ENCODE measurements at regions of chr7 and their contacts with region 1.

Region 1: DNA sequence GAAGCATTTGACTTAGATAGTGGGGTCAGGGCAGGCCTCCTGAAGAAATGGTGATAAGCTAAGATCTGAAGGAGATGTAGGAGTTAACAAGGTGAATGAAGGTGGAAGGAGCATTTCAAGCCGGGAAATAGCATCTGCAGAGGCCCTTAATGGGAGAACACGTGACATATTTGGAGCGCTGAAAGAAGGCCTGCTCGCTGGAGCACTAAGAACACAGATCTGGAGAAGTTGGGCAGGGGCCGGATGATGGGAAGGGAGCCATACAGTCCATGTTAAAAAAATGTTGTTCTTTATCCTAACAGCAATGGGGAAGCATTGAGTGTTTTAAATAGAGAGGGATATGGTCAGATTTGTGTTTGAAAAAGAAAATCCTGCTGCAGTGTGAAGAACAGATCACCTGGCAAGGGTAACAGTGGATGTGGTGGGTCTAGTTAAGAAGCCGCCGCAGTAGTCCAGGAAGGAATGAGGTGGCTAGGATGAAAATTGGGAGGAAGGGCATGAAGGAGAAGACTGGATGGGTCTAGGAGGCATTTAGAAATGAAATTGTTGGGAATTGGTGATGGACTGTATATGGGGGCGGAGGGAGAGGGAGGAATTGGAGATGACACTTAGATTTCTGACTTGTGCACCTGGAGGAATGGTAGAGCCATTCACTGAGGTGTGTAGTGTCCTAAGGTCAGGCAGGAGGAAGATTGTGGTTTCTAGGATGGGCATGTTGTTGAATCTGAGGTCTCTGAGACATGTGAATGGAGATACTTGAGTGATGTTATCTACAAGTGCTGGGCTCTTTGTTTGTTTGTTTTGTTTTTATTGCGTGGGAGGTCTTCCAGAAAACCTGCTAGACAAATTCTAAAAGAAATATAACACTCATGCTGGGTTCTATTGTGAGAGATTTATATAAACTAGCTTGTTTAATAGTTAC is 58.4 kb downstream of the MET start:
- DNase-seq: no peak
- H3K4me3 ChIP-seq: no peak overlapping the region
- H3K27ac ChIP-seq: no peak overlapping the region
- H3K4me1 ChIP-seq: no peaks in the 10 kb centered on the region
- H3K27me3 ChIP-seq: no peaks in the 10 kb centered on the region
- CTCF ChIP-seq: no peak

Region 2: GRCh38 chr7:116679500-116679899 is 50.9 kb before region 1 on chr7:
- CTCF ChIA-PET with region 1: no interaction called
- POLR2A ChIA-PET with region 1: interaction called, 15 read pairs
- intact Hi-C with region 1: no loop called
- DNase-seq: no peak
- H3K4me3 ChIP-seq: no peak overlapping the region
- H3K27ac ChIP-seq: no peak overlapping the region
- H3K4me1 ChIP-seq: no peaks in the 10 kb centered on the region
- H3K27me3 ChIP-seq: no peaks in the 10 kb centered on the region
- CTCF ChIP-seq: no peak

Measured in A673 (cell line).